PC-3 (cell line): ENCODE measurements at regions of chr18 and their contacts with region 1.

Region 1: DNA sequence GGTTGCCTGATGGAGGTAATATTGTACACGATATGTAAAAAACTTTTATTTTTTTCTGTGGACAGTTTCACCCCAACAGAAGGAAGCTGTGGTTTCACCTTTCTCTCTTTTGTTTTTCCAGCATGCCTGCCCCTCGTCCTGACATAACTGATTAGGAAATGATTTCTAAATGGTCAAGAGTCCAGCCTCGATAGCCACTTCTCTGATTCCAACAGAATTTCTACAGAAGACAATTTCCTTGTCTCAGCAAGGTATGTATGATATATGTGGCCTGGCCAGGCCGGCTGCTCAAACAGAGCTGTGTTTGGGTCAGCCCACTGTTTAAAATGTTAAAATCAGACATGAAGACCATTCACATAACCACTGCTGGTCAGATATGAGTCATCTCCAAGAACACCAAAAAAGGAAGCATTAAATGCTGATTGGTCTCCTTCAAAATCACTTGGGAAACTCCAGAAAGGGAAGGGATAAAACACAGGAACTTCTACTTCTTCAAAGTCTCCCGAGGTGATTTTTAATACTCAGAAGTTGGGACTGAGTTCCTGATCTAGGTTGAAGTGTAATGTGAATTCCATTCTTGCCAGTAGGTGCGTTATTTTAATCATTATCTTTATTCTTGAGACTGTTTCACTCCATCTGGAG is 22.3 kb downstream of the ATP8B1 start:
- DNase-seq: peak; percentile 82
- ATAC-seq: peak; percentile 54
- H3K4me3 ChIP-seq: no peak overlapping the region
- H3K27ac ChIP-seq: peak overlapping the region; percentile 42
- H3K4me1 ChIP-seq: peaks cover 54% of the 10 kb centered on the region
- H3K27me3 ChIP-seq: no peaks in the 10 kb centered on the region
- CTCF ChIP-seq: no peak

Region 2: GRCh38 chr18:57621246-57621604 is 159.6 kb before region 1 on chr18:
- CTCF ChIA-PET with region 1: no interaction called
- POLR2A ChIA-PET with region 1: interaction called, 12 read pairs
- intact Hi-C with region 1: no loop called
- DNase-seq: peak; percentile 10
- ATAC-seq: peak; percentile 53
- H3K4me3 ChIP-seq: peak overlapping the region; percentile 91
- H3K27ac ChIP-seq: peak overlapping the region; percentile 54
- H3K4me1 ChIP-seq: peaks cover 13% of the 10 kb centered on the region; the same call in 1 of the 2 replicates
- H3K27me3 ChIP-seq: no peaks in the 10 kb centered on the region
- CTCF ChIP-seq: no peak

Region 3: GRCh38 chr18:57698571-57699276 is 82.1 kb before region 1 on chr18:
- CTCF ChIA-PET with region 1: no interaction called
- POLR2A ChIA-PET with region 1: no interaction called
- intact Hi-C with region 1: loop called (anchors 10 kb)
- DNase-seq: peak; percentile 42
- ATAC-seq: peak; percentile 70
- H3K4me3 ChIP-seq: no peak overlapping the region
- H3K27ac ChIP-seq: peak overlapping the region; percentile 49
- H3K4me1 ChIP-seq: peaks cover 17% of the 10 kb centered on the region
- H3K27me3 ChIP-seq: no peaks in the 10 kb centered on the region
- CTCF ChIP-seq: no peak